Right cardiac atrium (tissue), 5 donors: ENCODE measurements at regions of chr17 and their contacts with region 1.

Region 1: GRCh38 chr17:67602956-67603355 is 114.8 kb upstream of the NOL11 start:
- DNase-seq: no peak
- ATAC-seq: no peak
- H3K4me3 ChIP-seq: no peak overlapping the region
- H3K27ac ChIP-seq: no peak overlapping the region
- H3K4me1 ChIP-seq: peaks cover 2% of the 10 kb centered on the region
- H3K27me3 ChIP-seq: no peaks in the 10 kb centered on the region

Region 2: DNA sequence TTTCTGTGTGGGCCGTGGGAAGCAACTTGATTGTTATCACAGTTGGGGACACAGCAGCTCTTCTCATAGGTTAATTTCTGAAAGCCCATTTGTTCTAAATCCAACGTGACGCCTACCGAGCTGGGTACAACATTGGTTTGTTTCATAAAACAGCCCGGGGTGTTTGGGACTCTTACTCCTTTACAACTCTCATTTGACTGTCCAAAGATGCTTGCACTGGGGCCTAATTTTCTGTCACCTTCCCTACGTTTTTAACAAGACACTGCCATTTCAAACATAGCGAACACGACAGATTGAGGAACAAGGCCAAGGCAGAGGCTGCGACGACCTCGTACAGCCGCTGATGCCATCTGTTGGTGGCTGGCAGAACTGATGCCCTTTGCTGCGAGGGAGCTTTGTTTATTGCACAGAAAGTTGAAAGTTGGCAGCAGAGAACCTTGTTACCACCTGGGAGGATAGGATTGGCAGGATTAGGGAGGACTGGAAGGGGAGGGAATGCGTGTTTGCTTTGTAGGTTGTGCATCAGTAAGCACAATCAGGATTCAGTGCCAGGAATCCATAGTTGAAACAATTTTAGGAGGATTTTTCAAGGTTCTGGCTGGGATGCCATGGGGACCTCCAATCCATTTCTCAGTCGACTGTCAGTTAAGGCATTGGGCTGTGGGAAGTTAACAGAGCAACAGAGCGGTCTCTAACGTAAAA is 127.6 kb before region 1 on chr17:
- intact Hi-C with region 1: loop called in 2 of 4 experiments (anchors 5 to 10 kb)
- DNase-seq: peak; percentile 72 to 92 (median 90)
- ATAC-seq: peak; percentile 68 to 81
- H3K4me3 ChIP-seq: no peak overlapping the region
- H3K27ac ChIP-seq: peak overlapping the region; percentile 85
- H3K4me1 ChIP-seq: peaks cover 2% of the 10 kb centered on the region
- H3K27me3 ChIP-seq: no peaks in the 10 kb centered on the region

Region 3: DNA sequence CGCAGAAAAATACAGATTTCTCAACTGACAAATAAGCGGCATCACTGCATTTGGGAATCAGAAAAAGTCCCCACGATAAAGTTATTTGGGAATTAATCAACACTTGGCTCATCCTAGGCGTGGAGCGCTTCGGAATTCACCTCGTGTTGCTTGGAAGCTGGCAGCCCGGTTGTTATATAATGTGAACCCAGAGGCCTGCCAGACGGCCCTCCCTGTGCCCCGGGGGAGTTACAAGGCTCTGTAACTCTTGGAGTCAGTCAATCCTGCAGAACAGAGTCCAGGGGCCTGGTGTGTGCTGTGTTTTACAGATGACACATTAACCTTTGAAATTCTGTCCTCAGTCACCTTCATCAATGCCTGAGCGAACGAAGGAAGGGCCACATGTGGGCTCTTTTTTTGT is 114.8 kb before region 1 on chr17:
- intact Hi-C with region 1: loop called in 1 of 4 experiments (anchors 10 kb)
- DNase-seq: peak; percentile 55 to 86 (median 83)
- ATAC-seq: peak; percentile 25 to 51
- H3K4me3 ChIP-seq: no peak overlapping the region
- H3K27ac ChIP-seq: no peak overlapping the region
- H3K4me1 ChIP-seq: peaks cover 6% of the 10 kb centered on the region
- H3K27me3 ChIP-seq: no peaks in the 10 kb centered on the region

Region 4: DNA sequence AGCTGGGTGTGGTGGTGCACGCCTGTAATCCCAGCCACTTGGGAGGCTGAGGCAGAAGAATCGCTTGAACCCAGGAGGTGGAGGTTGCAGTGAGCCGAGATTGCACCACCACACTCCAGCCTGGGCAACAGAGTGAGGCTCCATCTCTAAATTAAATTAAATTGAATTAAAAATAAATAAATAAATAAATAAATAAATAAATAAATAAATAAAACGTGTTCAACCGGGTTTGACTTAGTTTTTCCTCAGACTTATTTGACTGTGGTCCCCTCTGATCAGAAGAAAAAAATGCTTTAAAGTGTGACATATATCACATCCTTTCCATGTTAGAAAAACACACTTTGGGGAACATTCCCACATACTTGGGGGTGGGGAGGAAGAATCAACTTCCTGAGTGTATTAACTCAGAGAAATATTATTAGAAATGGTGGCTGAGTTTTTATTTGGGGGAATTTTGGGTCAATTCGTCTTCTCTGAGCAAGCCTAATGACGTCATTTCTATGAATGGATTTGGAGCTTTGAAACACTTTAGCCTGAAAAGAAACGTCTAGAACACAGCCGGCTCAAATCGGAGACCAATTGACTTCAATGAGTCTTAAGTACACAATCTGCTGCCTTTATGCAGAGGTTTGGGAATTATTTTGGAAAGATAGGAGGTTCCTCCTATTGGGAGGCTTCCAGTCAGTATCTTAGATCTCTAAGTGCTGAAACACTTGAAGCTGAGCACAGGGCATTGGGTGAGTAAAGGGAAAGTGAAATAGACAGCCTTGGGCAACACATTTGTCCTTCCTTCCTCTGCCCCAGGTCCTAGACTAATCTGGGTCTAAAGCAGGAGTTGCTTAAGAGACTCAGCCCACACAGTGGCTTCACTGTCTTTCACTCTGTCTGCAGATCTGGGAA is 93.3 kb before region 1 on chr17:
- intact Hi-C with region 1: no loop called
- DNase-seq: no peak
- ATAC-seq: peak; percentile 83 to 91
- H3K4me3 ChIP-seq: no peak overlapping the region
- H3K27ac ChIP-seq: no peak overlapping the region
- H3K4me1 ChIP-seq: peaks cover 4% of the 10 kb centered on the region
- H3K27me3 ChIP-seq: no peaks in the 10 kb centered on the region